T-cell (primary cell): ENCODE measurements at regions of chr1 and their contacts with region 1.

Region 1: GRCh38 chr1:95072532-95073419 is at the start of gene ALG14:
- DNase-seq: peak; percentile 83 to 97 (median 91)
- ATAC-seq: peak; percentile 94 to 97 (median 96)
- H3K4me3 ChIP-seq: peak within 1 kb of the TSS; percentile 84 to 90
- H3K4me3 Mint-ChIP-seq: peak within 1 kb of the TSS; percentile 91 to 95 (median 92)
- H3K27ac ChIP-seq: peak within 1 kb of the TSS; percentile 72
- H3K27ac Mint-ChIP-seq: peak within 1 kb of the TSS; percentile 98
- H3K4me1 ChIP-seq: peaks cover 5 to 10% of the 10 kb centered on the region in 2 experiments
- H3K4me1 Mint-ChIP-seq: peaks cover 14 to 27% (median 17%) of the 10 kb centered on the region in 3 donors
- H3K27me3 ChIP-seq: peaks cover 4 to 14% of the 10 kb centered on the region in 2 experiments
- H3K27me3 Mint-ChIP-seq: peaks cover 0 to 3% of the 10 kb centered on the region in 2 donors
- total RNA-seq, gene ALG14: 0.40 to 2.3 (median 1.7) TPM

Region 2: GRCh38 chr1:94854458-94855306 is 218.1 kb before region 1 on chr1:
- CTCF ChIA-PET with region 1: interaction called in 1 of 2 experiments, 10 read pairs
- POLR2A ChIA-PET with region 1: no interaction called
- DNase-seq: peak; percentile 42 to 88 (median 66)
- ATAC-seq: peak; percentile 94 to 98 (median 96)
- H3K4me3 ChIP-seq: peak overlapping the region; percentile 51 to 64
- H3K4me3 Mint-ChIP-seq: no peak overlapping the region
- H3K27ac ChIP-seq: no peak overlapping the region
- H3K27ac Mint-ChIP-seq: no peak overlapping the region
- H3K4me1 ChIP-seq: no peaks in the 10 kb centered on the region
- H3K4me1 Mint-ChIP-seq: no peaks in the 10 kb centered on the region
- H3K27me3 ChIP-seq: peaks cover 3 to 20% of the 10 kb centered on the region in 2 experiments
- H3K27me3 Mint-ChIP-seq: peaks cover 8% of the 10 kb centered on the region in 2 donors

Region 3: GRCh38 chr1:95043141-95043980 is 29.4 kb before region 1 on chr1:
- CTCF ChIA-PET with region 1: interaction called in 1 of 2 experiments, 11 read pairs
- POLR2A ChIA-PET with region 1: interaction called in 1 of 2 experiments, 3 read pairs
- DNase-seq: peak; percentile 55 to 87 (median 70)
- ATAC-seq: peak; percentile 94 to 99 (median 96)
- H3K4me3 ChIP-seq: no peak overlapping the region
- H3K4me3 Mint-ChIP-seq: no peak overlapping the region
- H3K27ac ChIP-seq: no peak overlapping the region
- H3K27ac Mint-ChIP-seq: no peak overlapping the region
- H3K4me1 ChIP-seq: peaks cover 0 to 4% of the 10 kb centered on the region in 2 experiments
- H3K4me1 Mint-ChIP-seq: no peaks in the 10 kb centered on the region
- H3K27me3 ChIP-seq: no peaks in the 10 kb centered on the region
- H3K27me3 Mint-ChIP-seq: no peaks in the 10 kb centered on the region

Region 4: GRCh38 chr1:95084317-95085176 is 11.8 kb after region 1 on chr1:
- CTCF ChIA-PET with region 1: interaction called, 10 read pairs
- POLR2A ChIA-PET with region 1: no interaction called
- DNase-seq: peak in 10 of 35 experiments; percentile 4 to 55 (median 9)
- ATAC-seq: peak; percentile 46 to 70 (median 60)
- H3K4me3 ChIP-seq: no peak overlapping the region
- H3K4me3 Mint-ChIP-seq: no peak overlapping the region
- H3K27ac ChIP-seq: no peak overlapping the region
- H3K27ac Mint-ChIP-seq: no peak overlapping the region
- H3K4me1 ChIP-seq: no peaks in the 10 kb centered on the region
- H3K4me1 Mint-ChIP-seq: peaks cover 0 to 9% (median 0%) of the 10 kb centered on the region in 3 donors
- H3K27me3 ChIP-seq: peaks cover 3 to 4% of the 10 kb centered on the region in 2 experiments
- H3K27me3 Mint-ChIP-seq: peaks cover 11 to 14% of the 10 kb centered on the region in 2 donors

Region 5: GRCh38 chr1:95233737-95234500 is 161.1 kb after region 1 on chr1 and contains the start of gene RWDD3:
- CTCF ChIA-PET with region 1: interaction called, 20 to 45 read pairs
- POLR2A ChIA-PET with region 1: interaction called in 1 of 2 experiments, 4 read pairs
- DNase-seq: peak; percentile 78 to 96 (median 90)
- ATAC-seq: peak; percentile 93 to 98 (median 96)
- H3K4me3 ChIP-seq: peak within 1 kb of the TSS; percentile 75 to 94
- H3K4me3 Mint-ChIP-seq: peak within 1 kb of the TSS; percentile 89 to 91 (median 90)
- H3K27ac ChIP-seq: peak within 1 kb of the TSS; percentile 70
- H3K27ac Mint-ChIP-seq: peak within 1 kb of the TSS; percentile 86 to 92
- H3K4me1 ChIP-seq: peaks cover 8 to 17% of the 10 kb centered on the region in 2 experiments
- H3K4me1 Mint-ChIP-seq: peaks cover 37 to 47% (median 46%) of the 10 kb centered on the region in 3 donors
- H3K27me3 ChIP-seq: peaks cover 0 to 2% of the 10 kb centered on the region in 2 experiments
- H3K27me3 Mint-ChIP-seq: peaks cover 13 to 19% of the 10 kb centered on the region in 2 donors
- total RNA-seq, gene RWDD3: 16.7 to 23.4 (median 21.6) TPM